ENCODE measurements at regions of chr3 and their contacts with region 1.

Region 1: DNA sequence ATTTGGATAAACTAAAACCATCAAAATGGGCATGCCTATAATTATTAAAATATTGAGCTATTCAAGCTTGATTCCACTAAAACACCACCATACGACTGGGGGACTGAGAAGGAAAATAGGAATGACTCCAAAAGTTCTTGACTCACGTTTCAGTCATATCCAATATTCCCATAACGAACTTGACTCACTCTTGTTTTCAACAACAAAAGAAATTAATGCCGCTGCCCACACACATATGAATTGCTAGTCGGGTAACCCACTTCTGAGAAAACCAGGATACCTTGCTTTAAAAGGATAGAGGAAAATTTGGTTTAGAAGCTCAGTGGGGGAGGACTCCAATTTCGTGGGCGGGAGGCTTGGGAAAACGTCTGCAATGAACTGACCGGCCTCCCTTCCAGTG is 5.2 kb downstream of the HTR3C start:
- DNase-seq: peak; percentile 26
- H3K4me3 ChIP-seq: no peak overlapping the region
- H3K27ac ChIP-seq: no peak overlapping the region
- H3K4me1 ChIP-seq: no peaks in the 10 kb centered on the region
- H3K27me3 ChIP-seq: no peaks in the 10 kb centered on the region
- CTCF ChIP-seq: no peak

Region 2: DNA sequence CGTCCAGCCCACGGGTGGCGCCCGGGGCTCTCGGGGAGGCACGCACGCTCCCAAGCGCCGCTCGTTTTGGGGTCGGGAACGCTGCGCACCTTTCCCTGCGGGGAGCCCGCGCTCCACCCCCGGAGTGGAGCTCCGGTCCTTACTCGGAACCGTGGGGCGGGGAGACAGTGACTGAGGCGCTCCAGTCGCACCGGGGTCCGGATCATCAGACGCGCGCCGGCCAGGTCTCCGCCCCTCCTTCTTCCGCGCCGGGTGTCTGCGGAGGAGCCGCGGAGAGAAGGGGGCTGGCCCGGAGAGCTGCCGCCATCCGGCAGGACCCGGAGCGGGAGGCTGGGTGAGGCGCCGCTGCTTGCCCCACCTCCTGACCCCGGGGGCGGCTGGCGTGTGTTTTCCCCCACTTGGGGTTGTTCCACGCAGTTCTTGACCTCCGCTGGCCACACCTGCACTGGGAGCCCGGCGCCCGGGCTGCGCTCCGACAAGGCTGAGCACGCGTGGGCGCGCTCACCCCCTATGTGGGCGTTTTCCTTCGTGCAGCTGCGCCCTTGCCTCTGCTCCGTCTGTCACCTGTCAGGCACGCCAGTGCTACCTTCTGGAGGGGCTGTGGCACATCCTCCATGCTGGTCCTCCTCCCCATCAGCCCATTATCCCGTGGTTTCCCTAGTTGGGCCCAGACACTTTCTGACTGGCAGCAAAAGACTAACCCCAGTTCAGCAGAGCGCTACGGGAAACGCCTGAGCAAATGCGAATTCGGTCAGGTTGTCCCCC is 629.4 kb before region 1 on chr3 and contains the start of gene MCF2L2:
- CTCF ChIA-PET with region 1: no interaction called
- dilution Hi-C with region 1: no loop called
- in situ Hi-C with region 1: no loop called
- intact Hi-C with region 1: no loop called
- DNase-seq: peak; percentile 55
- H3K4me3 ChIP-seq: peak within 1 kb of the TSS; percentile 68 to 94 (median 80)
- H3K27ac ChIP-seq: no peak within 1 kb of the TSS
- H3K4me1 ChIP-seq: peaks cover 15% of the 10 kb centered on the region
- H3K27me3 ChIP-seq: peaks cover 2% of the 10 kb centered on the region
- CTCF ChIP-seq: no peak
- total RNA-seq, gene MCF2L2: 2.0 to 2.7 TPM

Region 3: GRCh38 chr3:184092199-184092598 is 34.2 kb after region 1 on chr3:
- CTCF ChIA-PET with region 1: no interaction called
- dilution Hi-C with region 1: loop called (anchors 5 kb)
- in situ Hi-C with region 1: no loop called
- intact Hi-C with region 1: no loop called
- DNase-seq: no peak
- H3K4me3 ChIP-seq: no peak overlapping the region
- H3K27ac ChIP-seq: no peak overlapping the region
- H3K4me1 ChIP-seq: no peaks in the 10 kb centered on the region
- H3K27me3 ChIP-seq: no peaks in the 10 kb centered on the region
- CTCF ChIP-seq: no peak

Region 4: GRCh38 chr3:184185461-184186308 is 127.7 kb after region 1 on chr3 and contains the start of gene ABCF3:
- CTCF ChIA-PET with region 1: no interaction called
- dilution Hi-C with region 1: no loop called
- in situ Hi-C with region 1: no loop called
- intact Hi-C with region 1: no loop called
- DNase-seq: peak; percentile 98
- H3K4me3 ChIP-seq: peak within 1 kb of the TSS; percentile 44 to 95 (median 71)
- H3K27ac ChIP-seq: peak within 1 kb of the TSS; percentile 54
- H3K4me1 ChIP-seq: peaks cover 19% of the 10 kb centered on the region
- H3K27me3 ChIP-seq: no peaks in the 10 kb centered on the region
- CTCF ChIP-seq: no peak
- total RNA-seq, gene ABCF3: 50.8 to 58.2 TPM

Region 5: DNA sequence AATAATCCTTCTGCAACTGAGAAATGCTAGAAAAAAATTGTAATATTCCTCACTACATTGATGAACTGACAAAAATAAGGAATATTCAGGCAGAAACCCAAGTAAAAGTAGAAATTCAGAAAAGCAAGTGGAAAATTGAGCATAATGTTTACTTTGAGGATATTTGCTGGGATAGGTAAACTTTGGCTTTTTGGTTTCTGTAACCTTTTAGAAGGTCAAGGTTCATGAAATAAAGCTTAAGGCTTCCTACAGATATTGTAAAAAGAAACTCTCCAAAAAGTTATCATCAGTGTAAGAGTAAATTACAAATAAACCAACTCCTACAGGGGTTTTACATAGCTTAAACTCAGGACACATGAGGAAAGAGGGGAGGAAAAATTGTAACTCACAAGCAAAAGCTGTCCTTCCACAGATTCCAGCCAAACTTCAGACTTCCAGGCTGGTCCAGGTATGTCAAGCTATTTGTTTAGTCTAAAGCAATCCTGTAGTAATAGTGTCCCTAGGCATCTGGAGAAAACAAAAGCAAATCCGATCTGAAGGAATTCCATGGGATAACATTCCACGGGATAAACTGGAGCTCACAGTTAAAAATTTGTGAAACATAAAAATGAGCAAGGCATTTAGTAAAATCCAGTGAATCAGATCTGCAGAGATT is 1073.7 kb after region 1 on chr3:
- CTCF ChIA-PET with region 1: no interaction called
- dilution Hi-C with region 1: no loop called
- in situ Hi-C with region 1: no loop called
- intact Hi-C with region 1: no loop called
- DNase-seq: no peak
- H3K4me3 ChIP-seq: no peak overlapping the region
- H3K27ac ChIP-seq: no peak overlapping the region
- H3K4me1 ChIP-seq: no peaks in the 10 kb centered on the region
- H3K27me3 ChIP-seq: peaks cover 3% of the 10 kb centered on the region
- CTCF ChIP-seq: no peak

Measured in mammary epithelial cell (primary cell).